ENCODE measurements at regions of chr10 and their contacts with region 1.

Region 1: GRCh38 chr10:27504007-27504807 is at the start of gene RAB18:
- DNase-seq: peak; percentile 97 to 100 (median 98)
- H3K4me3 ChIP-seq: peak within 1 kb of the TSS; percentile 66
- H3K4me3 Mint-ChIP-seq: peak within 1 kb of the TSS; percentile 95 to 100 (median 99)
- H3K27ac ChIP-seq: peak within 1 kb of the TSS; percentile 90
- H3K27ac Mint-ChIP-seq: peak within 1 kb of the TSS; percentile 97 to 99 (median 99)
- H3K4me1 ChIP-seq: peaks cover 37% of the 10 kb centered on the region
- H3K4me1 Mint-ChIP-seq: peaks cover 48 to 58% (median 57%) of the 10 kb centered on the region in 3 donors
- H3K27me3 ChIP-seq: no peaks in the 10 kb centered on the region
- H3K27me3 Mint-ChIP-seq: peaks cover 0 to 8% of the 10 kb centered on the region in 2 donors
- total RNA-seq, gene RAB18: 68.2 to 71.1 TPM

Region 2: DNA sequence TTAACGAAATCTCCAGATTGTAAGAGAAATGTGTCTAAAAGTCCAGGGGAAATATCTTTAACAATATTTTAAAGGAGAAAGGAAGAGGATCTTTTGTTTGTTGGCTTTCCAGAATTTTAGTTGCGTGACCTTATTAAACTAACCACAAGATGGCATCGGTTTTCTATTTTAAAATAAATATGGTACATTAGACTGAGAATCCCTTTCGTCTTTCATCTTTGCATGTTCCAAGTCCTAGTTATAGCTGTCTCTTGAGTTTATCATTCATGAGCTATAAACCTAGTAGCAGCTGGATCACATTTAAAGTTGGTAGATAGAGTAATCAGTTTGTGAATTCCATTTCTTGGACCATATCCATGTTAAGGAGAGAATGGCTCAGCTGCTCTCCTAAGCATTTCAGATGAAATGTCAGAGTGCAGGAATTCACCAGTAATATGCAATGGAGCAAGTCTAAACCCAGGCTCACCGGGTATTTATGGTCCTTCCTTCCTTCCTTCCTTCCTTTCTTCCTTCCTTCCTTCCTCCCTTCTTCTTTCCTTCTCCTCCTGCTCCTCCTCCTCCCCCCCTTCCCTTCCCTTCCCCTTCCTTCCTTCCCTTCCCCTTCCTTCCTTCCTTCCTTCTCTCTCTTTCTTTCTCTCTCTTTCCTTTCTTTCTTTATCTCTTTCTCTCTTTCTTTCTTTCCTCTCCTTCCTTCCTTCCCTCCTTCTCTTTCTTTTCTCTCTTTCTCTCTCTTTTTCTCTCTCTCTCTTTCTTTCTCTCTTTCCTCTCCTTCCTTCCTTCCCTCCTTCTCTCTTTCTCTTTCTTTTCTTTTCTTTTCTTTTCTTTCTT is 57.9 kb before region 1 on chr10:
- CTCF ChIA-PET with region 1: interaction called, 12 read pairs
- POLR2A ChIA-PET with region 1: no interaction called
- DNase-seq: peak in 2 of 5 donors; percentile 36 to 42
- H3K4me3 ChIP-seq: no peak overlapping the region
- H3K4me3 Mint-ChIP-seq: peak overlapping the region in 4 of 7 donors; percentile 37 to 66 (median 48)
- H3K27ac ChIP-seq: no peak overlapping the region
- H3K27ac Mint-ChIP-seq: peak overlapping the region in 6 of 8 donors; percentile 6 to 87 (median 82)
- H3K4me1 ChIP-seq: no peaks in the 10 kb centered on the region
- H3K4me1 Mint-ChIP-seq: peaks cover 21 to 24% (median 23%) of the 10 kb centered on the region in 3 donors
- H3K27me3 ChIP-seq: no peaks in the 10 kb centered on the region
- H3K27me3 Mint-ChIP-seq: no peaks in the 10 kb centered on the region

Region 3: GRCh38 chr10:27525819-27526218 is 21.6 kb after region 1 on chr10:
- CTCF ChIA-PET with region 1: no interaction called
- POLR2A ChIA-PET with region 1: no interaction called
- DNase-seq: no peak
- H3K4me3 ChIP-seq: no peak overlapping the region
- H3K4me3 Mint-ChIP-seq: peak overlapping the region in 1 of 7 donors; percentile 3
- H3K27ac ChIP-seq: no peak overlapping the region
- H3K27ac Mint-ChIP-seq: peak overlapping the region in 7 of 8 donors; percentile 7 to 74 (median 18)
- H3K4me1 ChIP-seq: peaks cover 44% of the 10 kb centered on the region
- H3K4me1 Mint-ChIP-seq: peaks cover 82 to 95% (median 93%) of the 10 kb centered on the region in 3 donors
- H3K27me3 ChIP-seq: no peaks in the 10 kb centered on the region
- H3K27me3 Mint-ChIP-seq: no peaks in the 10 kb centered on the region

Measured in CD8-positive, alpha-beta memory T cell (primary cell).